GM13976 (cell line): ENCODE measurements at regions of chr6 and their contacts with region 1.

Region 1: GRCh38 chr6:71012866-71013469 is 56.1 kb upstream of the B3GAT2 start:
- DNase-seq: peak; percentile 55
- CTCF ChIP-seq: peak; percentile 83

Region 2: GRCh38 chr6:70310063-70310694 is 702.8 kb before region 1 on chr6:
- in situ Hi-C with region 1: loop called (anchors 25 kb)
- DNase-seq: peak; percentile 12
- CTCF ChIP-seq: peak; percentile 47